ENCODE measurements at regions of chr12 and their contacts with region 1.

Region 1: DNA sequence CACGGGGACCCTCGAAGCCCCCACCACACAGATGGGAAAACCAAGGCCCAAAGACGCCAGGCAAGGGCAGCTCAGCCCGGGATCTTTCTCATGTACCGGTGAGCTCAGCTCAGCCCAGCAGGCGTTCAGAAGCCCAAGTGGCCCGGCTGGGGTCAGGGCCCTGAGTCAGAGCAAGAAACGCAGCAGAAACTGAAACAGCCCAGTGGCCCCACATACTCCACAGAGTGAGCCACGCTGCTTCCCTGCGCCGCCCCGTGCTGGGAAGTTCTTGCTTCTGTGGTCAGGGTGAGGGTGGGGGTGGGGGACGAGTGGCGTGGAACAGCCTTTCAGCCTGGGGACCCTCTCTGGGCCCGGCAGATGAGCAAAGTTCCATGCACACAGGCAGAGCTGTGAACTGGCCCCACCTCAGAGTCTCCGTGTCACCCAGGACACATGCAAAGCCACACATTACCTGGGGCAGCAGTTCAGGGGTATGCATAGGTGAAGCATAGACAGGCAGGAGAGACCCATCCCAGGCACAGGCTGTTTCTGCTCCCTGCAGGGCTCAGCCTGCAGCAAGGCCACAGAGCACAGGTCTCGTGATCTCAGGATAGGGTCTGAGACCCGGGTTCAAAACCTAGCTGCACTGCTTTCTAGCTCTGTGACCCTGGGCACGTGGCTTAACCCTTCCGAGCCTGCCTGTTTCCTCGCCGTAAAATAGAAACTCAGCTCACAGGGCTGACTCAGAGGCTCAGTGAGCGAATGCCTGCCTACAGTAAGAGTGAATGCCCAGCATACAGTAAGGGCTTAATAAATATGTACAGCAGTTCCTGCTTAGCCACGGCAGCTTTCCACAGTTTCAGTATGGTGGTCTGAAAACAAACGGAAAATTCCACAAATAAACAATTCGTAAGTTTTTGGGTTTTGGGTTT is 21.6 kb downstream of the NCOR2 start:
- DNase-seq: peak; percentile 54
- H3K4me3 Mint-ChIP-seq: peak overlapping the region; percentile 42
- H3K27ac Mint-ChIP-seq: no peak overlapping the region
- H3K4me1 Mint-ChIP-seq: peaks cover 41% of the 10 kb centered on the region
- H3K27me3 Mint-ChIP-seq: no peaks in the 10 kb centered on the region

Region 2: DNA sequence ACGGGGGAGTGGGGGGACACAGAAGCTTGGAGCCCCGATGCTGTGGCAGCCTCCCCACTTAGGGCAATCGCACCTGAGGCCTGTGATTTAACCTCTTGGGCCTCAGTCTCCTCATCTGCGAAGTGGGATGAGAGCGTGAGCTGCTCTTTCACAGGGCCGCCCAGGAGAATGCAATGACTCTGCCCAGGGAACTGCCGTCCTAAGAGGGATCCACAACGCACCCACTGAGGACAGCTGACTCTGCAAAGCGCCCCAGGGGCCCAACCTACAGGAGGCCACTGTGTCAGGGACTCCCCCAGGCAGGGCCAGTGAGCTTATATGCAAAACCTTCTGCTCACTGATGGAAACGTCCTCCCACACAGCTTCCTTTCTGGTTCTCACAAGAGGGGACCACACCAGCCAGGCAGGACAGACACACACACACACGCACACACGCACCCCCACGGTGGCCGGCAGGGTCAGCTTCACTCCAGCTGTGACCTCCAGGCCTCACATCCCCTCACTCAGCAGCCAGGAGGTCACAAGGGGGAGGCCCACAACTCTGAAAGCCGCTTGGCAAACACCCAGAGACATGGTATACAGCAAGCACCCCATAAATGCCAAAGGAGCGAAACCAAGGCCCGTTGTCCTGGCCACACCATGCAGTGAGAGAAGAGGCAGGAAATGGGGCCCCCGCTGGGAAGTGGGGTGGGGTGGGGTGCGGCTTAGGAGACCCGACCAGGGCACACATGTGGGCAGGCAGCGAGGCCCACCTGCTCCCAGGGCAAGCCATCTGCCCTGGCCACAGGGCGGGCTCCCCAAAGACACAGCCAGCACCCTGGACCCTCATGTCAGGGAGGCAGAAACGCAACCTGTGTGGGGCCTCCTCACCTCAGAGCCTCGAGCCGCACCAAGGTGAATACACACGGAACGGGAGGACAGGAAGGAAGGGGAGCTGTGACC is 51.7 kb before region 1 on chr12:
- intact Hi-C with region 1: loop called (anchors 1 kb)
- DNase-seq: no peak
- H3K4me3 Mint-ChIP-seq: no peak overlapping the region
- H3K27ac Mint-ChIP-seq: peak overlapping the region; percentile 65
- H3K4me1 Mint-ChIP-seq: peaks cover 23% of the 10 kb centered on the region
- H3K27me3 Mint-ChIP-seq: no peaks in the 10 kb centered on the region

Region 3: GRCh38 chr12:124567661-124568373 is 22.1 kb after region 1 on chr12:
- intact Hi-C with region 1: loop called (anchors 1 kb)
- DNase-seq: peak; percentile 75
- H3K4me3 Mint-ChIP-seq: peak overlapping the region; percentile 78
- H3K27ac Mint-ChIP-seq: peak overlapping the region; percentile 78
- H3K4me1 Mint-ChIP-seq: peaks cover 10% of the 10 kb centered on the region
- H3K27me3 Mint-ChIP-seq: peaks cover 3% of the 10 kb centered on the region

Region 4: DNA sequence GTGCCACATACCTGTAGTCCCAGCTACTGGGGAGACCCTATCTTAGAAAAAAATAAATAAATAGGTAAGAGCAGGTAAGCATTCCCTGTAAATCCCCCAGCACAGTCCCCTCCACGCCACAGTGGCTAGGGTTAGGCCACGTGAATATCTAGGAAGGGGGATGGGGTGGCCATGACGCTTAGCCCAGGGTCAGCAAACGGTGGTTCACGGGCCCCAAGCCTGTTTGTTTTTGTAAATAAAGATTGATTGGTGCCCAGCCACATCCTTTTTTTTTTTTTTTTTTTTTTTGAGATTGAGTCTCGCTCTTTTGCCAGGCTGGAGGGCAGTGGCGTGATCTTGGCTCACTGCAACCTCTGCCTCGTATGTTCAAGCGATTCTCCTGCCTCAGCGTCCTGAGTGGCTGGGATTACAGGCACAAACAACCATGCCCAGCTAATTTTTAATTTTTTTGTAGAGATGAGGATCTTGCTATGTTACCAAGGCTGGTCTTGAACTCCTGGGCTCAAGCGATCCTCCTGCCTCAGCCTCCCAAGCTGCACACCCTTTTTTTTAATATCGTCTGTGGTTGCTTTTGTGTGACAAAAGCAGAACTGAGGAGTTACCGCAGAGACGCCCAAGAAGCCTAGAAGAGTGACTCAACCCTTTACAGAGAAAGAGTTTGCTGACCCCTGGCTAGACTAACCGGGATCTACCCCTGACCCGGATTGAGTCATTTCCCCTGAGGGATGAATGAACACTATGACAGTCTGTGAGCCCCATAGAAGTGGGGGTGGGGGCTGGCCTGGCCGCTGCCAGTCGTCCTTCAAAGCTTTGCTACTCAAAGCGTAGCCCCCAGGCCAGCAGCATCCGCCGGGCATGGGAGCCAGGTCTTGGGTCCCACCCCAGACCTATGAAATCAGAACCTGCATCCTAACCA is 135.4 kb after region 1 on chr12:
- intact Hi-C with region 1: loop called (anchors 5 kb)
- DNase-seq: peak; percentile 16
- H3K4me3 Mint-ChIP-seq: no peak overlapping the region
- H3K27ac Mint-ChIP-seq: no peak overlapping the region
- H3K4me1 Mint-ChIP-seq: peaks cover 30% of the 10 kb centered on the region
- H3K27me3 Mint-ChIP-seq: peaks cover 1% of the 10 kb centered on the region

Measured in activated T-helper 2 cell treated with anti-CD3 and anti-CD28 coated beads, Interferon-gamma antibody, Interleukin-2, Interleukin-4, amounts not matched to agents 10 μg/mL and 5 μg/mL and 100 μg/mL, durations not matched to agents 14 hours and 24 hours and 36 hours (primary cell).